ENCODE measurements at regions of chr2 and their contacts with region 1.

Region 1: GRCh38 chr2:171416009-171416926 is 17.5 kb downstream of the METTL8 start:
- DNase-seq: peak; percentile 96
- H3K4me3 ChIP-seq: peak overlapping the region; percentile 3
- H3K27ac ChIP-seq: peak overlapping the region; percentile 62
- H3K4me1 ChIP-seq: peaks cover 41% of the 10 kb centered on the region
- CTCF ChIP-seq: peak; percentile 98

Region 2: DNA sequence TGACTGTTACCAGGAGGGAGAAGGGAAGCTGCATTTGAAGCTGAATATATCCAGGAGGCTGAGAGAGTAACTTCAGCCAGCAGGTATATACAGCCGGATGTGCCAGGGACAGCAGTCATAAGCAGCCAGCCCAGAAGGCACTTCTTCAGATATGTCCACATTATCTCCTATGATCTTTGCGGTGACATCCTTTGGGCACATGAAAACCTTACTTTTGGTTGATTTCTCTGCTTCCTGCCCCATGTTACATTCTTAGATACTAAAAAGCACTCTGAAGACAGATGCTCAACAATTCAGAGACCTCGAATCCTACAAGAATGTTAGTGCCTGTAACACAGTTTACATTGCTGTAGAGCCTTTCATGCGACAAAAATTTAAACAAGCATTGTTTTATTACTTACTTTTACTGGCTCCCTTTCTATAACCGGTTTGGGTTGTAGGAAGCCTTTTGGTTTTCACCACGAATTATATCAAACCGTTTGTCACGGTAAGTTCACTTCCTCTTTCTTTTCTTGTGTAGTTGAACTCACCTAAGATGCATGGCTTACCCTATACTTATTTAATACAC is 205.3 kb before region 1 on chr2:
- CTCF ChIA-PET with region 1: no interaction called
- POLR2A ChIA-PET with region 1: no interaction called
- intact Hi-C with region 1: loop called (anchors 1 kb)
- DNase-seq: peak; percentile 80
- H3K4me3 ChIP-seq: peak overlapping the region; percentile 59
- H3K27ac ChIP-seq: peak overlapping the region; percentile 87
- H3K4me1 ChIP-seq: peaks cover 38% of the 10 kb centered on the region
- CTCF ChIP-seq: no peak

Region 3: DNA sequence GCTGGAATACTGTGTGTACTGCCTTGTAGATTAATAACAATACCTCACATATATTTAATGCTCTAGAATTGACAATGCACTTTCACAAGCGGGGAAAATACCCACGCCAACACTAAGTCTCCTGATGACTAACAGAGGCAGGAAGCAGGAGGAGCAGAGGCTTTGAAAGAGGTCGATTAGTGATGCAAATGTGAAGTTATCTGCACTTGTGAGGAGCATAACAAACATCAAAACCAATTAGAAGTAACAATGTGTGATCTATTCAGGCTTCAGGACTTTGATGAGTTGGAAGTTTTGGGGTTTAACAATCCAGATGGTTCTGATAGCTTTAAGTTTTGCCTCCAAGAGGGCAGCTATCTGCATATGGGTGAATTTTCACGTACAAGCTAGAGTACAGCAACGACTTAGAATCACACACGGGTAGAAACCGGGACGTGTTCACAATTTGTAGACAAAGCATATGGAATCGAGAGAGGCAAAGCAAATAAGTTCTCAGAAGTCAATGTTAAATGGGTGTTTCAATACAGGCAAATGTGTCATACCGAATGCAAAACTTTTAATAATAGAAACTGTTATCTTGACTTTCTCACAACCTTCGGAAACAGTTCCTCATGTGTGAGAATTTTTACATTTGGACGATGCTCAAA is 97.0 kb before region 1 on chr2:
- CTCF ChIA-PET with region 1: interaction called, 9 read pairs
- POLR2A ChIA-PET with region 1: interaction called, 10 read pairs
- intact Hi-C with region 1: loop called (anchors 1 kb)
- DNase-seq: peak; percentile 64
- H3K4me3 ChIP-seq: peak overlapping the region; percentile 42
- H3K27ac ChIP-seq: peak overlapping the region; percentile 100
- H3K4me1 ChIP-seq: peaks cover 100% of the 10 kb centered on the region
- CTCF ChIP-seq: no peak

Region 4: DNA sequence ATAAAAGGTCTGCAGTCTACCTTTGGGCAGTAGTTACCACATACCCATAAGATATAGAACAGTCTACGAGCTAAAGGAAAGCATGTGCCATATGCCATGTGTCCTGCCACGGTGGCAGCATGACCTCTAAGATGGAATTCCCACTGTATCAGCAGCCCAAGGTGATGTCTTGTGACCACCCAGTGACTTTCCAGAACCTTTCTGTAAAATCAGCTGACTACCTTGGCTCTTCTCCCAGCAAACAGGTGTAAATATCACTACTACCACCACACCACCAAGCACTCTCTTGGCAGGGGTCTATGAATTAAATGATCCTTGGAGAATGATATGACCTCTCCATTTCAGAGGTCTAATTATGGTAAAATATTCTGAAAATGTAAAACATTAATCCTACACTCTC is 82.1 kb before region 1 on chr2:
- CTCF ChIA-PET with region 1: no interaction called
- POLR2A ChIA-PET with region 1: interaction called, 14 read pairs
- intact Hi-C with region 1: no loop called
- DNase-seq: no peak
- H3K4me3 ChIP-seq: no peak overlapping the region
- H3K27ac ChIP-seq: peak overlapping the region; percentile 26
- H3K4me1 ChIP-seq: peaks cover 77% of the 10 kb centered on the region
- CTCF ChIP-seq: no peak